Psoas muscle (tissue), 8 donors: ENCODE measurements at regions of chr5 and their contacts with region 1.

Region 1: GRCh38 chr5:178116143-178116885 is 3.0 kb downstream of the N4BP3 start:
- DNase-seq: no peak
- ATAC-seq: no peak
- H3K4me3 ChIP-seq: peak overlapping the region; percentile 64
- H3K27ac ChIP-seq: no peak overlapping the region
- H3K4me1 ChIP-seq: peaks cover 18% of the 10 kb centered on the region
- H3K27me3 ChIP-seq: peaks cover 0 to 53% (median 15%) of the 10 kb centered on the region in 3 donors
- CTCF ChIP-seq: no peak

Region 2: DNA sequence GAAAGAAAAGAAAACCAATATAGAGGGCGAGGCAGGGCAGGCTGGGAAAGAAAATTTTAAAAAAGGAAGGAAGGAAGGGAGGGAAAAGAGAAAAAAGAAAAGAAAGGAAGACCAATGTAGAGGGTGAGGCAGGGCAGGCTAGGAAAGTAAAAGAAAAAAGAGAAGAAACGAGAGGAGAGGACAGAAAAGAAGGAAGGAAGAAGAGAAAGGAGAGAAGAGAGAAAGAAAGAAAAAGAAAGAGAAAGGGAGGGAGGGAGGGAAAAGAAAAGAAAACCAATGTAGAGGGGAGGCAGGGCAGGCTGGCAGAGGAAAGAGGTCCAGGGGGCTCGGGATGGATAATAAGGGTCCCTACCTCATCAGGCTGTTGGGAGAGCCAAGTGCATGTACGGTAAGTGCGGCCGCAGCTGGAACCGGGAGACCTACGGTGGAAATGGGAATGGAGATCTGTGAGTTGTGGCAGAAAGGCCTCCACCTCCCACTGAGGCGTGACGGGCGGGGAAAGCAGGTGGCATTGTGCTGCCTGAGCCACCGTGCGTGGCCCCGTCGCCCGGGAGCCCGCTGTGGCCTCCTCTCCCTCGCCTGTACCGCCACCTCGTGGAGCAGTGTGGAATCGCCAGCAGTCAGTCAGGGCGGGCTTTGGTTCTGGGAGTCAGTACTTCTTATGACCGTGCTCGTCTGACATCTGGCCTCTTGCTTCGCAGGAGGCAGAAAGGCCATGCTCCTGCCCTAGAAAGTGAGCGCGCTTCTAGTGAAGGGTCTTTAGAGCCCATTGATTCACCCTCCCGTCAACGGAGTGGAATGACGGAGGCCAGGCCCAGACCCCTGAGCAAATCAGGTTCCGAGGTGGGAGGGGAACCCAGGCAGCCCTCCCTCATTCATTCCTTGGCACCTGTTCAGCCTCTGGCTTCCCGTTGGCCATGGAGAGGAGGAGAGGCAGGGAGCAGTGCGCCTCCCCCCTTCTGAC is 47.7 kb after region 1 on chr5:
- intact Hi-C with region 1: loop called in 1 of 2 experiments (anchors 2 kb)
- DNase-seq: peak; percentile 85 to 91
- ATAC-seq: peak; percentile 99 to 100 (median 99)
- H3K4me3 ChIP-seq: peak overlapping the region; percentile 44
- H3K27ac ChIP-seq: no peak overlapping the region
- H3K4me1 ChIP-seq: peaks cover 4% of the 10 kb centered on the region
- H3K27me3 ChIP-seq: peaks cover 0 to 12% (median 6%) of the 10 kb centered on the region in 3 donors
- CTCF ChIP-seq: peak; percentile 99

Region 3: DNA sequence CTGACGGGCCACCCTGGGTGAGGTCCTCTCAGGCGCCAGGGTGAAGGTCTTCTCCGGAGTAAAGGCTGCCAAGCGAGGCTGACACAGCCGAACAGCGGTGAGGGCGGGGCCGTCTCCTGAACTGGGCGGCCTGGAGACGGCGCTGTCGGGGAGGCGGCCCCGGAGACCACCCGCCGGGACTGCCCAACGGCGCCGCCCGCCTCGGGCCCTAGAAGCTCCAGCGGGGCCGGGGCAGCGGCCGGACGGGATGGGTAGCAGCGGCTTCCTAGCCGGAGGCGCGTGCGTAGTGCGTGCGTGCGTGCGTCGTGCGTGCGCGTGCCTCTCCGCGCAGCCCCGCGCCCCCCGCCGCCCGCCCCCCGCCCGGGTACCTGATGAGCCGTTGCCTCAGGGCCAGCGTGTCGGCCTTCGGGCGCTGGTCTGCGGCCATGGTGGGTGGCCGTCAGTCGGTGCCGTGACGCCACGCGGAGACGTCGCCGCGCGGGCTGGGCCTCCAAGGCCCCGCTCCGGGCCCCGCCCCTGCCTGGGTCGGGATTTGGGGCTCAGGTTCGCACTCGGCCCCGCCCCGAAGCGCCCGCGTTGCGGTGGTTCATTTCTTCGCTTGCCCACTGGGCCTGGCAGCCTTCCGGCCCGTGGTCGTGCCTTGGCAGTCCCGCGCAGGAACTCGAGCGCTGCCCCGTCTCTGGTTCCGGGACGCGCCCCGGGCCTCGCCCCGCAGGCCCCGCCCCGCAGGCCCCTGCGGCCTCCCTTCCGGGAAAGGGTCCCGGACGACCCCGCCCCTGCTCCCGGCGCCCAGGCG is 116.0 kb after region 1 on chr5 and contains the start of gene PHYKPL:
- intact Hi-C with region 1: no loop called
- DNase-seq: peak; percentile 86 to 90
- ATAC-seq: peak; percentile 59 to 69 (median 66)
- H3K4me3 ChIP-seq: peak within 1 kb of the TSS; percentile 94
- H3K27ac ChIP-seq: peak within 1 kb of the TSS; percentile 99
- H3K4me1 ChIP-seq: peaks cover 55% of the 10 kb centered on the region
- H3K27me3 ChIP-seq: no peaks in the 10 kb centered on the region
- CTCF ChIP-seq: no peak
- total RNA-seq, gene PHYKPL: 43.2 to 51.6 (median 45.2) TPM